HepG2 (cell line): ENCODE measurements at regions of chr1 and their contacts with region 1.

Region 1: DNA sequence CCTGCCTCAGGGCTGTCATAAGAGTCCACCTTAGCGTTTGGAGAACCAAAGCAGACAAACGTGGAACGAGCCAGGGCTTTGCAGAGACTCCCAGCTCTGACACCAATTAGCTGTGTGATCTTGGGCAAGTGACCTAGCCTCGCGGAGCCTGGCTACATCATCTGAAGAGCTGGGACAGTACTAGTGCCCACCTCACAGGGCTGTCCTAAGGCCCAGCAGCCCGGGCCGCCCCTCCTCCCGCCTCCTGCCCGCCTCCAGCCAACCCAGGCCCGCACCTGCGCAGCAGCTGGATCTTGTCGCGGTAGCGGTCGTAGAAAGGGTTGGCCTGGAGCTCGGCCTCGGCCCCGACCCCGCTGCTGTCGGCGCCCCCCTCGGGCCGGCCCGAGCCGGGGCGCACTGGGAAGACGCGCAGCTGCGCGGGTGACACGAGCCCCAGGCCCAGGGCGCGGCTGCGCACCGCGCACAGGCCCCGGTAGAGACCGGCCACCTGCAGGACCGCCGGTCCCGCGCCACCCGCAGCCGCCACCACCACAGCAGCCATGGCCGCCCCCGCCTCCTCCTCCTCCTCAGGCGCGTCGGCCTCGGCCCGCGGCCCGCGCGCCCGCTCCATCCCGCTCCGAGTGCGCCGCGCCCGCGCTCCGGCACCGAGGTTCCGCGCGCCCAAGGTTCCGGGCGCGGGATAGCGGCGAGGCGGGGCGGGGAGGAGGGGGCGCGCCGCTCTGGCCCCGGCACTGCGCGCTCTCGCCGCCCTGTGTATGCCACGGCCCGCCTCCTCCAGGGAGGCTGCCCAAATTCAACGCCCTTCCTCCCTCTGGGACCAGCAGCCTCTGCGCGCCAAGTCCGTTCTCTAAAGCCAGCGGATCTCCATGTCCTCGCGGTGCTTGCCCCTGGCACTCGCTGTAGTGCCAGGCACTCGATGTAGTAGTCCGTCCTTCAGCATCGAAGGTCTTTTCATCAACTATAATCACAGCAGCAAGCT is at the start of gene ATPAF1:
- DNase-seq: peak; percentile 41
- ATAC-seq: peak; percentile 91
- H3K4me3 ChIP-seq: peak within 1 kb of the TSS; percentile 81 to 86 (median 83)
- H3K27ac ChIP-seq: peak within 1 kb of the TSS; percentile 36
- H3K4me1 ChIP-seq: peaks cover 19% of the 10 kb centered on the region
- H3K27me3 ChIP-seq: no peaks in the 10 kb centered on the region; a peak in 2 of 5 replicates
- CTCF ChIP-seq: peak; percentile 8; the same call in 1 of the 2 replicates
- EP300 ChIP-seq: no peak
- POLR2A ChIP-seq: peak; percentile 52 to 81
- RAD21 ChIP-seq: peak; percentile 45; the same call in 1 of the 2 replicates
- total RNA-seq, gene ATPAF1: 66.6 and 82.9 TPM in 2 replicates

Region 2: GRCh38 chr1:46616277-46617107 is 51.6 kb before region 1 on chr1 and contains the start of gene MOB3C:
- CTCF ChIA-PET with region 1: no interaction called
- POLR2A ChIA-PET with region 1: interaction called, 8 read pairs
- in situ Hi-C with region 1: no loop called
- intact Hi-C with region 1: loop called (anchors 10 kb)
- DNase-seq: no peak
- ATAC-seq: peak; percentile 76
- H3K4me3 ChIP-seq: peak within 1 kb of the TSS; percentile 59 to 83 (median 78)
- H3K27ac ChIP-seq: peak within 1 kb of the TSS; percentile 51
- H3K4me1 ChIP-seq: peaks cover 38% of the 10 kb centered on the region
- H3K27me3 ChIP-seq: no peaks in the 10 kb centered on the region; a peak in 1 of 5 replicates
- CTCF ChIP-seq: no peak
- EP300 ChIP-seq: no peak
- POLR2A ChIP-seq: peak; percentile 41 to 60; a peak in 2 of 4 replicates
- RAD21 ChIP-seq: no peak
- total RNA-seq, gene MOB3C: 3.1 and 3.5 TPM in 2 replicates

Region 3: DNA sequence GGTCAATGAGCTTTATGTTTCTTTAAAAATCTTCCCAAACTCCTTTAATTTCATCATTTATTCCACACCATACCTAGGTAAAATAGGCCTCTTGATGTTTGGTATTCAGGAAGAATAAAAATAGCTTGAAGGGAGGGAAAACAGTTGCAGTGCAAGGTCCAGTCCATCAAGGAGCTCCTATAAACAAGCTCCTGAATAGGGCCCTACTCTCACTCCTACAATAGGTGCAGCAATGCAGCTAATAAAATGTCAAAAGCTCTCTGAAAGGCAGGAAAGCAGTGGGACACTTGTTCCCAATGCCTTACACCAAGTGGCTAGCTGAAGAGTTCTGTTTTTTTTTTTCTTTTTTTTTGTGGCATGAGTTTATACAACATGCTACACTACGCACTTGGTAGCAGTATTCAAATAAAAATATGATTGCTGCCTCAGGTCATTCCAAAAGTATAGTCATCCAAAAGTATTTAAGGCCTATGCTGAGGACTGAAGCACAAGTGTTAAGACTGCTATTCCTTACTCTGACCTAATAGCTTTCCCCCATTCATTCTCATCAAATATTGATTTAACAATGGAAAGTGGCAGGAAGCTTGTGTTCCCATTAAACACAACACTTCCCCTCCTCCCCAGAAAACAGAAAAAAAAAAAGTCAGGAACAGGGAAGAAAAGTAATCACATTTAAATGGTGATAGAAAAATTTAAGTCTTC is 13.4 kb after region 1 on chr1:
- CTCF ChIA-PET with region 1: no interaction called
- POLR2A ChIA-PET with region 1: interaction called, 11 read pairs
- in situ Hi-C with region 1: no loop called
- intact Hi-C with region 1: no loop called
- DNase-seq: no peak
- ATAC-seq: no peak
- H3K4me3 ChIP-seq: no peak overlapping the region
- H3K27ac ChIP-seq: no peak overlapping the region
- H3K4me1 ChIP-seq: peaks cover 21% of the 10 kb centered on the region
- H3K27me3 ChIP-seq: no peaks in the 10 kb centered on the region
- CTCF ChIP-seq: no peak
- EP300 ChIP-seq: no peak
- POLR2A ChIP-seq: no peak
- RAD21 ChIP-seq: no peak